Endothelial cell of umbilical vein (primary cell): ENCODE measurements at regions of chr19 and their contacts with region 1.

Region 1: DNA sequence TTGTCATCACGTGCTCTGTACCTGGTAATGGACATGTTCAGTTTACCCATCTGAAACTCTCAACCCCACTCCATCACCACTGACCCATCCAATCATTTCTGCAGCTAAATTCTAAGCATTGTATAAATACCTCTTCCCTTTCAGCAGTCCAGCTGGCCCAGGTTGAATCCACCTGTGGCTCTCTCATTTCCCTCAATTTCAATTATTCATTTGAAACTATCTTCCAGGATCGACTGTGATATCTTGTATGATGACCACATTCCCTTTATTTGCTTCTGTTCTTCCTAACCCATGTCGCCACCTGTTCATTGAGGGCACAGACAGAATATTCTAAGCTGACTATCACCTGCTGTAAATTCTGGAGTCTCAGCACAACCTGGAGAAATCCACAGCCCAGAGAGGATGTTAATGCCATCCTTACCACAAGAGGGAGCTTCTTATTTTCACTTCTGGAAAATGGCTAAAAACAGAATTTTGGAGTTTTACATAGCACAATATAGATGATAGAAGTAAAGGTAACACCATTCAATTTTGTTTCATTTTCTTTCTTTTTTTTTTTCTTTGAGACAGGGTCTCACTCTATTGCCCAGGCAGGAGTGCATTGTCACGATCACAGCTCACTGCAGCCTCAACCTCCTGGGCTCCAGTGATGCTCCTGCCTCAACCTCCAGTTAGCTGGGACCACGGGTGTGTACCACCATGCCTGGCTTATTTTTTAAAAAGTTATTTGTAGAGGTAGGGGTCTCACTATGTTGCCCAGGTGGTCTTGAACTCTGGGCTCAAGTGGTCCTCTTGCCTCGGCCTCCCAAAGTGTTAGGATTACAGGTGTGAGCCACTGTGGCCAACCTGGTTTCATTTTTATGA is 38.6 kb downstream of the ZNF823 start:
- DNase-seq: peak; percentile 34
- H3K4me3 ChIP-seq: no peak overlapping the region
- H3K27ac ChIP-seq: no peak overlapping the region
- H3K4me1 ChIP-seq: peaks cover under 1% of the 10 kb centered on the region
- H3K27me3 ChIP-seq: no peaks in the 10 kb centered on the region
- CTCF ChIP-seq: peak; percentile 47 to 58
- POLR2A ChIP-seq: no peak

Region 2: GRCh38 chr19:11659612-11660011 is 40.6 kb before region 1 on chr19:
- CTCF ChIA-PET with region 1: no interaction called
- POLR2A ChIA-PET with region 1: no interaction called
- dilution Hi-C with region 1: no loop called
- intact Hi-C with region 1: loop called (anchors 2 kb)
- DNase-seq: no peak
- H3K4me3 ChIP-seq: no peak overlapping the region
- H3K27ac ChIP-seq: no peak overlapping the region
- H3K4me1 ChIP-seq: no peaks in the 10 kb centered on the region
- H3K27me3 ChIP-seq: no peaks in the 10 kb centered on the region
- CTCF ChIP-seq: no peak
- POLR2A ChIP-seq: no peak

Region 3: DNA sequence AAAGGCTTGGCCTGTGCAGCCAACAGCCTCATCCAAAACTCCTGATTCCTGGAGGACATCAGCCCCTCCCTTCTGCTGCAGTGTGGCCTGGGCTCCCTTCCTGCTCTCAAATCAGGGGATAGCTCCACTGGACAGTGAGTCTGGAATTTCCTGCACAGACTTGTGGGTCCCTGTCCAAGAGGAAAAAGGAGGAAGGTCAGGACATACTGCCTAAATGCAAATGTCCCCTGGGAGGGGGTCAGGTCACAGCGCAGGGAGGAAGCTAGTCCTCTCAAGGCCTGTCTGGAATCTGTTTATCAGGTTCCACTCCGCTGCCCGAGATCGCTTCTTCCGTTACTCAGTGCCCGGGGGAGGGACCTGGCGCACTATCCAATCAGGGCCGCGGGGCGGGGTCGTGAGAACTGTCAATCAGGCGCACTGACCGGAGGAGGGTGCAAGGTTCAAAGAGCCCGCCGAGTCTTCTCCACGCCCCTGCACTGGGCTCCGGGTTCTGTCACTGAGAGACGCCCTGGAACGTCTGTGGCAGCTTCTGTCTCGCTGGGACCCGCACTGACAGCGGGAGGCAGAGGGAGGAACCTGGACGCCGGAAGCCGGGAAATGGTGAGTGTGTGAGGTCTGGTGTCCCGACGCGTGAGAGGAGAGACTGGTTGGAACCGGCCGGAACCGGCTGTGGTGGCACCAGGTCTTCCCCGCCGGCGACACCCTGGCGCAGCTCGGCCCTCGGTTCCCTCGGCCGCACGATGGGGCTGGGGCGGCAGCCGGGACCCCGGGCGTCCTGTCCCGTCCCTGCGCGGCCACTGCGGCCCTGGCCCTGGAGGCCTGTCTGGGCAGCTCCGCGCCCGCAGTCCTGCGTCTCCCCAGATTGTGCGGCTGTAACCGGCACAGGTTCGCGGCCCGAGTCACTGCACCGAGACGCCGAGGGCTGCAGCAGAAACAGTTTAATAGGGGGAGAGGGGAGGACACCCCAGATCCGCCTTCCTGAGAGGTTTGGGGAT is 66.7 kb after region 1 on chr19 and contains the start of gene ZNF441:
- CTCF ChIA-PET with region 1: interaction called, 13 read pairs
- POLR2A ChIA-PET with region 1: no interaction called
- dilution Hi-C with region 1: no loop called
- intact Hi-C with region 1: loop called (anchors 2 kb)
- DNase-seq: peak; percentile 95
- H3K4me3 ChIP-seq: peak within 1 kb of the TSS; percentile 46 to 88 (median 71)
- H3K27ac ChIP-seq: peak within 1 kb of the TSS; percentile 65
- H3K4me1 ChIP-seq: peaks cover 6% of the 10 kb centered on the region
- H3K27me3 ChIP-seq: no peaks in the 10 kb centered on the region
- CTCF ChIP-seq: no peak
- POLR2A ChIP-seq: peak; percentile 69
- total RNA-seq, gene ZNF441: 2.4 and 4.5 TPM in 2 replicates